Right cardiac atrium (tissue), 5 donors: ENCODE measurements at regions of chr10 and their contacts with region 1.

Region 1: DNA sequence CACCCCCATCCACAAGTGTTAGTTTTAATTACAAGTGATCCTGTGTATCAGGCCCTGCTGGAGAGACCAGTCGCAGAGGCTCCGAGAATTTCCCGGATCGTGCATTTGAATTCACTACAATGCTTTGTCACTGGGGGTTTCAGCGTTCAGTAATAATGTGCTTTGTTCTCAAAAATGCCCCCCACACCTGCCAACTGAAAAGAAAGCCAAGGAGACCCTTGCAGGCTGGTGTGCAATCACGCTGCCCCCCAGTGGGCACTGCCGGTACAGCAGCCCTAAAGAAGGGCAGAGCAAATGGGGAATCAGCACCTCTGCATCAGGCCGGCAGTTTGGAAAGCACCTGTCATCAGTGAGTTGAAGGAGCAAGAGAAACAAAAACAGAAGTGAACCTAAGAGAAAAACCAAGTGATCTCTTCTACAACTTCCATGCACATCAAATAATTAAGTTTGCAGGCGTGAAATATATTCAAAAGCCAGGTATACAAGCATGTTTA is 177.6 kb downstream of the PARD3 start:
- DNase-seq: peak; percentile 54 to 88 (median 84)
- ATAC-seq: peak in 1 of 2 donors; percentile 62
- H3K4me3 ChIP-seq: no peak overlapping the region
- H3K27ac ChIP-seq: no peak overlapping the region
- H3K4me1 ChIP-seq: no peaks in the 10 kb centered on the region
- H3K27me3 ChIP-seq: no peaks in the 10 kb centered on the region

Region 2: GRCh38 chr10:33193057-33193700 is 1444.3 kb before region 1 on chr10:
- intact Hi-C with region 1: loop called in 1 of 4 experiments (anchors 10 kb)
- DNase-seq: peak; percentile 85 to 92 (median 88)
- ATAC-seq: peak; percentile 84 to 89
- H3K4me3 ChIP-seq: no peak overlapping the region
- H3K27ac ChIP-seq: peak overlapping the region; percentile 43
- H3K4me1 ChIP-seq: peaks cover 9% of the 10 kb centered on the region
- H3K27me3 ChIP-seq: no peaks in the 10 kb centered on the region

Region 3: DNA sequence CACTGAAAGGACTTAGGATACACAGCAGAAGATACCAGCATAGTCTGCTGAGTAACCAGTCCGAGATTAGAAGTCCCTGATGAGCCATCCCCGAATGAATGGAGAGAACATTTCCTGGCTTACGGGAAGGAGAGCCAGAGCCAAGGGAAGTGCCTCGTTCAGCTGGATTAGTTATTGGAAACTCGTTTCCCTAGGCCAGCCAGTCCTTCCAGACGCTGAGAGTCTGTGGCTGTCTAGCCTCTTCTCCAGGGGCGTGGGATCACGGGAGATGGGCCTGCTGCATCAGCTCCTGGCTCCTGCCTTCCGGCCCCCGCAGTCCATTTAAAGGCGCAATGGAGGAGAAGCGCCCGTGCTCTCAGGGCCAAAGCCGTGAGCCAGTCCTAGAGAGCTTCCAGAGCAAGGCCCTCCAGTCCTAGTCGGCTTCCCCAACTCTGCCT is 535.2 kb before region 1 on chr10:
- intact Hi-C with region 1: loop called in 1 of 4 experiments (anchors 10 kb)
- DNase-seq: peak; percentile 76 to 90 (median 86)
- ATAC-seq: peak; percentile 93 to 96
- H3K4me3 ChIP-seq: no peak overlapping the region
- H3K27ac ChIP-seq: peak overlapping the region; percentile 46
- H3K4me1 ChIP-seq: peaks cover 5% of the 10 kb centered on the region
- H3K27me3 ChIP-seq: no peaks in the 10 kb centered on the region

Region 4: GRCh38 chr10:34504534-34504933 is 132.9 kb before region 1 on chr10:
- intact Hi-C with region 1: loop called in 1 of 4 experiments (anchors 10 kb)
- DNase-seq: no peak
- ATAC-seq: peak in 1 of 2 donors; percentile 86
- H3K4me3 ChIP-seq: no peak overlapping the region
- H3K27ac ChIP-seq: no peak overlapping the region
- H3K4me1 ChIP-seq: peaks cover 4% of the 10 kb centered on the region
- H3K27me3 ChIP-seq: no peaks in the 10 kb centered on the region

Region 5: GRCh38 chr10:34528320-34528719 is 109.1 kb before region 1 on chr10:
- intact Hi-C with region 1: loop called in 1 of 4 experiments (anchors 5 kb)
- DNase-seq: no peak
- ATAC-seq: no peak
- H3K4me3 ChIP-seq: no peak overlapping the region
- H3K27ac ChIP-seq: no peak overlapping the region
- H3K4me1 ChIP-seq: peaks cover 6% of the 10 kb centered on the region
- H3K27me3 ChIP-seq: no peaks in the 10 kb centered on the region

Region 6: GRCh38 chr10:34655286-34656170 is 18.1 kb after region 1 on chr10:
- intact Hi-C with region 1: no loop called
- DNase-seq: no peak
- ATAC-seq: no peak
- H3K4me3 ChIP-seq: no peak overlapping the region
- H3K27ac ChIP-seq: no peak overlapping the region
- H3K4me1 ChIP-seq: peaks cover 2% of the 10 kb centered on the region
- H3K27me3 ChIP-seq: no peaks in the 10 kb centered on the region